CD4-positive, alpha-beta T cell (primary cell): ENCODE measurements at regions of chr7 and their contacts with region 1.

Region 1: GRCh38 chr7:45917658-45918057 is 3.4 kb downstream of the IGFBP3 start:
- DNase-seq: peak; percentile 43 to 77 (median 64)
- ATAC-seq: peak; percentile 58
- H3K4me3 ChIP-seq: no peak overlapping the region
- H3K4me3 Mint-ChIP-seq: no peak overlapping the region
- H3K27ac ChIP-seq: no peak overlapping the region
- H3K27ac Mint-ChIP-seq: no peak overlapping the region
- H3K4me1 ChIP-seq: peaks cover 27% of the 10 kb centered on the region
- H3K4me1 Mint-ChIP-seq: peaks cover 11% of the 10 kb centered on the region
- H3K27me3 ChIP-seq: peaks cover 33 to 49% of the 10 kb centered on the region in 2 experiments
- H3K27me3 Mint-ChIP-seq: peaks cover 67% of the 10 kb centered on the region
- CTCF ChIP-seq: peak; percentile 89

Region 2: GRCh38 chr7:46109437-46109836 is 191.8 kb after region 1 on chr7:
- CTCF ChIA-PET with region 1: no interaction called
- POLR2A ChIA-PET with region 1: no interaction called
- intact Hi-C with region 1: loop called in 1 of 2 experiments (anchors 5 kb)
- DNase-seq: no peak
- ATAC-seq: no peak
- H3K4me3 ChIP-seq: no peak overlapping the region
- H3K4me3 Mint-ChIP-seq: no peak overlapping the region
- H3K27ac ChIP-seq: no peak overlapping the region
- H3K27ac Mint-ChIP-seq: no peak overlapping the region
- H3K4me1 ChIP-seq: no peaks in the 10 kb centered on the region
- H3K4me1 Mint-ChIP-seq: no peaks in the 10 kb centered on the region
- H3K27me3 ChIP-seq: no peaks in the 10 kb centered on the region
- H3K27me3 Mint-ChIP-seq: no peaks in the 10 kb centered on the region
- CTCF ChIP-seq: no peak

Region 3: DNA sequence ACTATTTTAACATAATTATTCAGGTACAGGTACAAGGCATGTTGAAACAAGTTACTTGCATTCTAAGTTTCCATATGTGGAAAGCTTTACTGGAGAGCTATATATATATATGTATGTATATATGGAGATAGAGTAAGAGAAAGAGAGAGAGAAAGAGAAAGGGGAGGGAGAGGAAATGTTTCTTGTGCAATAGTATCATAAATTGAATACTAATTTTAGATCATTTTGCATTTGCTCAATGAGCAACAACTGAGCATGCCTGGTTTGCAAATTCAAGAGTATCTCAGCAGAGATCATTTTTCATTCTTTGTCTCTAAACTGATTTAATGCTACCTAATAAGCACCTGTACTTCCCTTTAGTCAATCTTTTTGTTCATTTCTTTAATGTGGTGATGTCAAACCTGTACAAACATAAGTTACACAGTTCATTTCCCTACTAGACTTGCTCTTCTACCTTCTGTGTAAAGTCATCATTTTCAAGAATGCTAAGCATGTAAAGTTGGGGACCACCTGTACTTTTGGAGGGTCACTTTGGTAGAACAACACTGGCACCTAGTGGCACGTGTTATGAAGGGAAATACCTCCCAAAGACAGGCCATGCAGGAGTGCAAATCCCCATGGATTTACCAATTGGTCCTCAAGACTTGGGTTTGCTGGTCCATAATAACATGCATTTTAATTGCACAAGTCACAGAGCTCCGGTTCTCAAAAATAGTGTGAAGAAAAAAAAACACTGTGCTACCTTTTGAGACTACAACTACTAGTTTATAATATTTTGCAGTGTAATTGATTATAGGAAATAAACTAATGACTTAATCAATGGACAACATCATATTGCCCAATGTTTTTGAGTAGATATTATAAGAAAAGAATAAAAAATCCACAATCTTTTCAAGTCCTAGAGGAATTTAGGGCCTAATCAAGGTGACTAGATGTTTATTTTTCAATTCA is 434.6 kb after region 1 on chr7:
- CTCF ChIA-PET with region 1: no interaction called
- POLR2A ChIA-PET with region 1: no interaction called
- intact Hi-C with region 1: loop called in 1 of 2 experiments (anchors 2 kb)
- DNase-seq: peak in 4 of 14 experiments; percentile 23 to 39 (median 28)
- ATAC-seq: no peak
- H3K4me3 ChIP-seq: no peak overlapping the region
- H3K4me3 Mint-ChIP-seq: no peak overlapping the region
- H3K27ac ChIP-seq: no peak overlapping the region
- H3K27ac Mint-ChIP-seq: no peak overlapping the region
- H3K4me1 ChIP-seq: no peaks in the 10 kb centered on the region
- H3K4me1 Mint-ChIP-seq: no peaks in the 10 kb centered on the region
- H3K27me3 ChIP-seq: no peaks in the 10 kb centered on the region
- H3K27me3 Mint-ChIP-seq: no peaks in the 10 kb centered on the region
- CTCF ChIP-seq: no peak

Region 4: GRCh38 chr7:47088329-47089067 is 1170.8 kb after region 1 on chr7:
- CTCF ChIA-PET with region 1: no interaction called
- POLR2A ChIA-PET with region 1: no interaction called
- intact Hi-C with region 1: loop called (anchors 1 to 2 kb)
- DNase-seq: peak in 4 of 14 experiments; percentile 14 to 45 (median 36)
- ATAC-seq: no peak
- H3K4me3 ChIP-seq: no peak overlapping the region
- H3K4me3 Mint-ChIP-seq: no peak overlapping the region
- H3K27ac ChIP-seq: no peak overlapping the region
- H3K27ac Mint-ChIP-seq: no peak overlapping the region
- H3K4me1 ChIP-seq: peaks cover 3% of the 10 kb centered on the region
- H3K4me1 Mint-ChIP-seq: no peaks in the 10 kb centered on the region
- H3K27me3 ChIP-seq: peaks cover 0 to 4% of the 10 kb centered on the region in 2 experiments
- H3K27me3 Mint-ChIP-seq: peaks cover 11% of the 10 kb centered on the region
- CTCF ChIP-seq: peak; percentile 68

Region 5: GRCh38 chr7:47818796-47819606 is 1901.3 kb after region 1 on chr7:
- CTCF ChIA-PET with region 1: no interaction called
- POLR2A ChIA-PET with region 1: no interaction called
- intact Hi-C with region 1: loop called in 1 of 2 experiments (anchors 5 kb)
- DNase-seq: peak in 6 of 14 experiments; percentile 12 to 41 (median 24)
- ATAC-seq: no peak
- H3K4me3 ChIP-seq: no peak overlapping the region
- H3K4me3 Mint-ChIP-seq: no peak overlapping the region
- H3K27ac ChIP-seq: no peak overlapping the region
- H3K27ac Mint-ChIP-seq: no peak overlapping the region
- H3K4me1 ChIP-seq: no peaks in the 10 kb centered on the region
- H3K4me1 Mint-ChIP-seq: no peaks in the 10 kb centered on the region
- H3K27me3 ChIP-seq: peaks cover 0 to 2% of the 10 kb centered on the region in 2 experiments
- H3K27me3 Mint-ChIP-seq: no peaks in the 10 kb centered on the region
- CTCF ChIP-seq: peak; percentile 66